Ovary (tissue), 10 donors: ENCODE measurements at regions of chr3 and their contacts with region 1.

Region 1: GRCh38 chr3:70702132-70702531 is 389.7 kb upstream of the MDFIC2 start:
- DNase-seq: no peak
- H3K4me3 ChIP-seq: no peak overlapping the region
- H3K27ac ChIP-seq: no peak overlapping the region
- H3K4me1 ChIP-seq: no peaks in the 10 kb centered on the region
- H3K27me3 ChIP-seq: no peaks in the 10 kb centered on the region
- CTCF ChIP-seq: no peak
- EP300 ChIP-seq: no peak
- POLR2A ChIP-seq: no peak

Region 2: GRCh38 chr3:68832680-68833079 is 1869.5 kb before region 1 on chr3:
- intact Hi-C with region 1: loop called in 1 of 4 experiments (anchors 5 kb)
- DNase-seq: no peak
- H3K4me3 ChIP-seq: no peak overlapping the region
- H3K27ac ChIP-seq: no peak overlapping the region
- H3K4me1 ChIP-seq: no peaks in the 10 kb centered on the region
- H3K27me3 ChIP-seq: no peaks in the 10 kb centered on the region
- CTCF ChIP-seq: no peak
- EP300 ChIP-seq: no peak
- POLR2A ChIP-seq: no peak

Region 3: GRCh38 chr3:70606018-70606417 is 96.1 kb before region 1 on chr3:
- intact Hi-C with region 1: no loop called
- DNase-seq: no peak
- H3K4me3 ChIP-seq: no peak overlapping the region
- H3K27ac ChIP-seq: no peak overlapping the region
- H3K4me1 ChIP-seq: no peaks in the 10 kb centered on the region
- H3K27me3 ChIP-seq: no peaks in the 10 kb centered on the region
- CTCF ChIP-seq: no peak
- EP300 ChIP-seq: no peak
- POLR2A ChIP-seq: no peak

Region 4: GRCh38 chr3:70999730-71000129 is 297.6 kb after region 1 on chr3:
- intact Hi-C with region 1: no loop called
- DNase-seq: no peak
- H3K4me3 ChIP-seq: no peak overlapping the region
- H3K27ac ChIP-seq: no peak overlapping the region
- H3K4me1 ChIP-seq: peaks cover 4% of the 10 kb centered on the region
- H3K27me3 ChIP-seq: no peaks in the 10 kb centered on the region
- CTCF ChIP-seq: no peak
- EP300 ChIP-seq: no peak
- POLR2A ChIP-seq: no peak